Cardiac septum (tissue), 1 donor: ENCODE measurements at regions of chr15 and their contacts with region 1.

Region 1: GRCh38 chr15:63277038-63277892 is at the start of gene APH1B:
- DNase-seq: peak; percentile 91
- total RNA-seq, gene APH1B: 7.7 TPM

Region 2: GRCh38 chr15:63048115-63048775 is 229.0 kb before region 1 on chr15:
- intact Hi-C with region 1: loop called (anchors 10 kb)
- DNase-seq: peak; percentile 96

Region 3: DNA sequence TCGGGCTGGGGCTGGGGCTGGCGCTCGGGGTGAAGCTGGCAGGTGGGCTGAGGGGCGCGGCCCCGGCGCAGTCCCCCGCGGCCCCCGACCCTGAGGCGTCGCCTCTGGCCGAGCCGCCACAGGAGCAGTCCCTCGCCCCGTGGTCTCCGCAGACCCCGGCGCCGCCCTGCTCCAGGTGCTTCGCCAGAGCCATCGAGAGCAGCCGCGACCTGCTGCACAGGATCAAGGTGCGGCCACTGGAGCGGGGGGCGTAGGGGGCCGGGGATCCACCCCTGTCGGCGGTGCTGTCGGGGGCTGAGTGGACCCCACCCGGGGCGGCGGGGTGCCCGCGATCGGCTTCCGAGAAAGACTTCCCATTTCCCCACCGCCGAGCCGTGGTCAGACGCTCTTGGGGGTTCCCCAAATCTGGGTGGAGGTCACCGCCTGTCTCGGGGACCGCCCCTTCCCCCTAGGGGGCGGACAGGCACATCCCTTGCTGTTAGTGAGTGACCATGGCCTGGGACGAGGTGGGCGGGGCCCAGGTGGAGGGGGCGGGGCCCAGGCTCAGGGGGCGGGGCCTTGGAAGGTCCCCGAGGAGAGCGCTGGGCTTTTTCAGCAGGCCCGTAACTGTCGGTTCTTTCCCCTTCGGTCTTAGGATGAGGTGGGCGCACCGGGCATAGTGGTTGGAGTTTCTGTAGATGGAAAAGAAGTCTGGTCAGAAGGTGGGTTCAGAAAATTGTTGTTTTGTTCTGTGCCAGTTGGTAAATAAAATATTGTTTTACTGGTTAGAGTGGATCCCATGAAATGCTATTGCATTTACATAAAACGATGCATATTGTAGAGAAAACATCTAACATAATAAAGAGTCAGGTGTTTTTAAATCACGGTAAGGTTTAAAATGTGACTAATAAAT is 155.0 kb before region 1 on chr15:
- intact Hi-C with region 1: loop called (anchors 5 kb)
- DNase-seq: peak; percentile 94

Region 4: GRCh38 chr15:63157118-63157843 is 120.0 kb before region 1 on chr15 and contains the start of gene RPS27L:
- intact Hi-C with region 1: loop called (anchors 5 kb)
- DNase-seq: peak; percentile 97
- total RNA-seq, gene RPS27L: 104 TPM

Region 5: DNA sequence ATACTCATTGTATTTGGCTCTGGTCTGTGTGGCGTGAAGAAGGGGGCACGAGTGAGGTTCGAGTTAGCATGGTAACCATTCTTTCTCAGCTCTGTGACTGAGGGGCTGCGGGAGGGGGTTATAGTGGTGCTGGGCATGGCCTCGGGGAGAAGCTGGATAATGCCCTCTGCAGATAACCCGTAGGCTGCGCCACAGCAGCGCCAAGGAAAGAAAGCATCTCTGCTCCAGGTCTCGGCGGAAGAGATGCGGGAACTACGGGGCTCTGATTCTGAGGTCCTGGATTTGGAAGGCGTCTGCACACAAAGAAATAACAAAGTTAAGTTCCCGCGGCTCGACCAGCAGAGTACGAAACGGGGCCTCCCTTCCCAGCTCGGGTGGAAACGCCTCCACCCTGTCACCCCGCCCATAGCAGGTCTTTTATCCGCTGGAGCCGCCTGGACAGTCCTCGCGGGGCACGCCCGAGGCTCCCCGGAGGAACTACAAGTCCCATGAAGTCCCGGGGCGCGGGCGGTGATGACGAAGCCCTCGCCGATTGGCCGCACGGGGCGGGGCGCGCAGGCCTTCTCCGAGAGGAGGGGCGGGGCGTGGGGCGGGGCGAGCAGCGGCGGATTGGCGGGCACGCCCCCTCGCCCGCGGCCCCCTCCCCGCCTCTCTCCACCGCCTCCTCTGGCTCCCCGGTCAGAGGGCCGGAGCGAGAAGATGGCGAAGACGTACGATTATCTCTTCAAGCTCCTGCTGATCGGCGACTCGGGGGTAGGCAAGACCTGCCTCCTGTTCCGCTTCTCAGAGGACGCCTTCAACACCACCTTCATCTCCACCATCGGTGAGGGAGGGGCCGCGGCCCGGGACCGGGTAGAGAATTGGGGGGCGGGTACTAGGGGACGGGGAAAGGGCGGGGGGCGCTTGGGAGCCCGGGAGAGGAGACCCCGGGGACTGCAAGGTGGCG is 88.1 kb before region 1 on chr15 and contains the start of gene RAB8B:
- intact Hi-C with region 1: loop called (anchors 5 kb)
- DNase-seq: peak; percentile 99
- total RNA-seq, gene RAB8B: 8.7 TPM

Region 6: GRCh38 chr15:63332367-63333124 is 55.3 kb after region 1 on chr15:
- intact Hi-C with region 1: no loop called
- DNase-seq: no peak